ENCODE measurements at regions of chr15 and their contacts with region 1.

Region 1: DNA sequence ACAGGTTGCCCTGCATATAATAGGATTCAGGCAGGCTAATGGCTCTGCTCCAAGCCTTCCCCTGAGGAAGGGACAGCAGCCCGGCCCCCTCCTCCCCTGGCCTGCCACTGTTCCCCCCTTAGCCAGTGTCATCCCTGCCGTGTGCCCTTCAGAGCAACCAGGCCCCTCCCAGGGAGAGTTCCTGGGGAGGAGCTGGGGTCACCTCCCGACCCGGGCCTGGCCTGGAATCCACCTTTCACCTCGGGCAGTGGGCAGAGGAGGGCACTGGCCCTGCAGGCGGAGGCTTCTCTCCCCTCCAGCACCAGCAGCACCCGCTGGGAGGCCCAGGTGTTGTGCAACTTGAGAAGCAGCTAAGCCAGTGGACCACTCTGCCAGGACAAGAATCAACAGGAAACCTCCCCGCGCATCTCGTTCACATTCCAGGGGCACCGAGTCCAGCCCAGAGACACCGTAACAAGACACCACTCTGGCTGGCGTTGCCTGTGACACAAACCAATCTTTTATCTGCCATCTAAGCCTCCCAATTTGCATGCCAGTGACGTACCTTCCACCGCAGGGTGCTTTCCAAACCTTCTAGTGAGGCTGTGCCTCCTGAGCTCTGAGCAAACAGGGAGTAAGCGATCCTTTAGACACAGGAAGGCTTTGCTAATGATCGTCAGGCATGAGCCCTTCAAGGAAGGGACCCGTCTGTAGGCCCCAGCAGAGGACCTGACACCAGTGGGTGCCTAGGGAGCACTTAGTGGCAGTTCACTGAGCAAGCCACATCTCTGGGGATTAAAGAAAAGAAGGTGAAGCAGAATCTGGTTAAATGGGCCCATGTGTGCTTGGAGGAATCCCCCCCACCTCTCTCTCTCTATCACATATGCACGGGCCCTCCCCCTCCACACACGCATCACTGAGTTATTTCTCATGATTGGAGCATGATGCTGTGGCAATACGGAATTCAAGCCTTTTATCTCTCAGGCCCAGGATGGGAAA is 98.9 kb upstream of the TLE3 start:
- DNase-seq: peak; percentile 96 to 98
- H3K4me3 ChIP-seq: peak overlapping the region; percentile 7; the same call in 1 of the 2 replicates
- H3K27ac ChIP-seq: peak overlapping the region; percentile 85
- H3K4me1 ChIP-seq: peaks cover 53% of the 10 kb centered on the region
- H3K27me3 ChIP-seq: no peaks in the 10 kb centered on the region
- CTCF ChIP-seq: no peak

Region 2: GRCh38 chr15:69480932-69481658 is 715.5 kb before region 1 on chr15:
- CTCF ChIA-PET with region 1: no interaction called
- POLR2A ChIA-PET with region 1: no interaction called
- intact Hi-C with region 1: loop called (anchors 2 kb)
- DNase-seq: peak; percentile 76 to 95
- H3K4me3 ChIP-seq: no peak overlapping the region
- H3K27ac ChIP-seq: peak overlapping the region; percentile 70
- H3K4me1 ChIP-seq: peaks cover 43% of the 10 kb centered on the region
- H3K27me3 ChIP-seq: no peaks in the 10 kb centered on the region
- CTCF ChIP-seq: no peak

Region 3: GRCh38 chr15:70066447-70066846 is 130.2 kb before region 1 on chr15:
- CTCF ChIA-PET with region 1: no interaction called
- POLR2A ChIA-PET with region 1: no interaction called
- intact Hi-C with region 1: no loop called
- DNase-seq: no peak
- H3K4me3 ChIP-seq: no peak overlapping the region
- H3K27ac ChIP-seq: no peak overlapping the region
- H3K4me1 ChIP-seq: no peaks in the 10 kb centered on the region
- H3K27me3 ChIP-seq: no peaks in the 10 kb centered on the region
- CTCF ChIP-seq: no peak

Region 4: DNA sequence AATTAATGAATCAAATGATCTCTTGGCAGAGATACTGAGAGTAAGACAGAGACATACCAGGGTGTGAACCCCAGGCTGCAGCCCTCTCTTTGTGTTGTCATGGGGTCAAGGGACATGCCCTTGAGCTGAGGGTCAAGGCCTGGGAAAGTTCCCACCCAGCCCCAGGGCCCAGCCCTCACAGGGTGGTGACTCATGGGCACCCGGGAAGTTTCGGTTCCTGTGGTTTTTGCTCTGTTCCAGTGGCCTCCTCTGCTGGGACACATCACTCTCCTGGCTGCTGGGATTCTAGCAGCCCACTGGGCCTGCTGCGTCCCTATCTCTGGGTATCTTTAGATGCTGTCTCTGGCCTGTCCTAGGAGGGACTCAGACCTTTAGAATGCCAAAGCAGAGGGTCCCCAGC is 49.3 kb after region 1 on chr15:
- CTCF ChIA-PET with region 1: no interaction called
- POLR2A ChIA-PET with region 1: interaction called, 3 read pairs
- intact Hi-C with region 1: loop called (anchors 1 kb)
- DNase-seq: peak; percentile 72 to 74
- H3K4me3 ChIP-seq: no peak overlapping the region
- H3K27ac ChIP-seq: peak overlapping the region; percentile 72
- H3K4me1 ChIP-seq: peaks cover 51% of the 10 kb centered on the region
- H3K27me3 ChIP-seq: no peaks in the 10 kb centered on the region
- CTCF ChIP-seq: no peak

Region 5: DNA sequence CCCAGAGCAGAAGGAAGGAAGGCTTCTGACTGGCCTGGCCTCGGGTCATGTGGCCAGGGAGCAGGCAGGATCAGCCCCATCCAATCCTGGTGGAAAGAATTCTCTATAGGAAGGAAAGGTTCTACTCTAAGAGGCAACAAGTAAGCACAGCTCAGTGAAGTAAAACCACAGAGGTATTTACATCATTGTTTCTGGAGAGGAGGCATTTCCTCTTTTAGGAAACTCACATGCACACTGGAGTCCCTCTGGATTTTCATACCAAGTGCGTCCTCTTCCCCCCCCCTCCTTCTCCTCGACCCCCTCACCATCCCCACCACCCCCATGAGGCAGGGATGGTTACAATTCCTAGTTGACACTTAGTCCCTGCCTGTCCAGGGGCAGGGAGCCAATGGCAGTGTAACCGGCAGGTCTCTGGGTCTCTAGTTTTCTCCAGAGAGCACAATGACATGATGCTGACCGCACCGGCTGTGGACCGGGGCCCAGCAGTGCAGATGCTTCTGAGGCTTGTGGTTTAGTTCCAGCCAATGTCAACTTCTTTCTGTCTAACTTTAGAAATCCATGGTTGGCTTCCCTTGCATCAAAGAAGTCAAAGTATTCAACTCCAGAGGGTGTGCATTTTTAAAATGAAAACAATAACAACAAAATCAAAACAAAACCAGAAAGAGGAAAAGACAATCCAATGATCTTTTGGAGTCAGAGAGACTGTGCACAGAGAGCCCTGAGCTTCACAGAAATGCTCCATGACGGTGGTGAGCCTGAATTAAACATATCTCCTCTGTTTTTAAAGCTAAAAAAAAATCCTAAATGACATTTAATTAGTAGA is 131.5 kb after region 1 on chr15:
- CTCF ChIA-PET with region 1: no interaction called
- POLR2A ChIA-PET with region 1: interaction called, 3 read pairs
- intact Hi-C with region 1: loop called (anchors 1 kb)
- DNase-seq: peak in 1 of 2 experiments; percentile 49
- H3K4me3 ChIP-seq: no peak overlapping the region
- H3K27ac ChIP-seq: no peak overlapping the region
- H3K4me1 ChIP-seq: peaks cover 31% of the 10 kb centered on the region
- H3K27me3 ChIP-seq: no peaks in the 10 kb centered on the region
- CTCF ChIP-seq: no peak

Region 6: DNA sequence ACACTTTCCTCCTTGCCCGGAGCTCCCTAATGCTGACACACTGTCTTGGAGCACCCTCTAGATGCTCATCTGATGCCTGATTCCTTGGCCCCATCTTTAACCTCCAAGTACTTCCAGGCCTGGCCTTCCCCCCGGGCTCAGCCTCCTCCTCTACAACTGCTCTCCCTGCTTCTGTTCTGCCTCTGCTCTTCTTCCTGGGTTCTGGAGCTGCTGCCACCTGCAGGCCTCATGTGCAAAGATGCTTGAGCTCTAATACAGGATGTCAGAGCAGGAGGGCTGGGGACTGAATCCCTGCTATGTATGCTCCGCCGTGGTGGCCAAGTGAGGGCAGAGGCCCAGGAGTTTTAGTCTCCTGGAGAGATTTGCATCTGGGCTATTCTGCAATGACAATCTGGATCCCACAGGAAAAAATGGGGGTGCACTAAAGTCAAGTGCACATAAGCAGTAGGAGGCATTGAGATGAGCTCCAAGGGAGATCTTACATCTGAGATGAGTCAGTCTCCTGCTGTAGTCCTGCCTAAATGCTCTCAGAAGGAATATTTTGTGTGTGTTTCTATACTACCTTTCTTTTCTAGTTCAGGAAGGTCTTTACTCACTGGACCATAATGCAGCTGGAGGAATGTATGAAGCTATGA is 270.4 kb after region 1 on chr15:
- CTCF ChIA-PET with region 1: interaction called, 4 read pairs
- POLR2A ChIA-PET with region 1: no interaction called
- intact Hi-C with region 1: loop called (anchors 2 kb)
- DNase-seq: peak; percentile 42 to 49
- H3K4me3 ChIP-seq: no peak overlapping the region
- H3K27ac ChIP-seq: no peak overlapping the region
- H3K4me1 ChIP-seq: peaks cover 63% of the 10 kb centered on the region
- H3K27me3 ChIP-seq: no peaks in the 10 kb centered on the region
- CTCF ChIP-seq: peak; percentile 70

Region 7: DNA sequence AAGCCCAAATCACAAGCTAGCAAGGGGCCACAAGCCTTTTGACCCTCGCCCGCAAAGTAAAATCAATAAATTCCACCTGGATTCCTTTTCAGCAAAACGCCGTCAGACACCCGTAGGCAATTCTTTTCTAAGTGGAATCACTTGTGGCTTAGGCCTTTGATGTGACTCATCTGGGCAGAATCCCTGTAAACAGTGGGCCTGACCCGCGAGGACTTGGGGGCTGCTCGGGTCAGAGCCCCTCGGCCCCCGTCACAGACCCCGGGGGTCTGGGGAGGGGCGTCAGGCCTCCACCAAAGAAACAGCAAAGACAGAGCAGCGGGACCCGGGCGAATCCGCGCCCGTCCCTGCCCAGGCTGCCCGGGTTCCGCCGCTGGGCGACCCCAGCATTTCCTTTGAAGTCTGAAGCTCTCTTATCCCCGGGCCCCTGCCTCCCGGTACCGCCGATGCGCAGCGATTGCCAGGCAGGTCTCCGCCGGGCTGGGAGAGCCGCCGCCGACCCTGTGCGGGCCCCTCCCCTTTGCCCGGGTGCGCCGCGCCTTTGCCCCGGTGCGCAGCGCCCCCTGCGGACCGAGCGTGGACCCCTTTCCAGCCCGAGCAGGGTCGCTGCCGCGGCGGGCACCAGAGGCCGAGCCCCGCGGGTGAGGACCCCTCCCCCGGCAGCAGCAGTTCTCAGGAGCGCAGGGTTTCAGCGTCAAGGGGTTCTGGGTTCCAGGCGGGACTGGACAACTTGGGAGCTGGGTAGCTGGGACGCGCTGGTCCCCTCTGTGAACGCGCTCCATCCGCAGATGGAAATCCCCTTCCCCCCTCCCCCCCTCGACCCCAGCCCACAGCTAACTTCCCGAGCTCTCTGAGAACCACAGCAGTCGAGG is 388.5 kb after region 1 on chr15:
- CTCF ChIA-PET with region 1: no interaction called
- POLR2A ChIA-PET with region 1: no interaction called
- intact Hi-C with region 1: loop called (anchors 5 kb)
- DNase-seq: peak; percentile 71 to 86
- H3K4me3 ChIP-seq: peak overlapping the region; percentile 46; the same call in 1 of the 2 replicates
- H3K27ac ChIP-seq: peak overlapping the region; percentile 81
- H3K4me1 ChIP-seq: peaks cover 18% of the 10 kb centered on the region
- H3K27me3 ChIP-seq: no peaks in the 10 kb centered on the region
- CTCF ChIP-seq: peak; percentile 74